IMR-90 (cell line): ENCODE measurements at regions of chr9 and their contacts with region 1.

Region 1: GRCh38 chr9:34899535-34900158 is 58.4 kb upstream of the PHF24 start:
- DNase-seq: peak; percentile 71
- ATAC-seq: peak; percentile 100
- H3K4me3 ChIP-seq: no peak overlapping the region
- H3K27ac ChIP-seq: no peak overlapping the region
- H3K4me1 ChIP-seq: no peaks in the 10 kb centered on the region
- H3K27me3 ChIP-seq: peaks cover 25% of the 10 kb centered on the region
- CTCF ChIP-seq: peak; percentile 94
- POLR2A ChIP-seq: no peak
- RAD21 ChIP-seq: peak; percentile 97

Region 2: GRCh38 chr9:34222451-34222850 is 677.2 kb before region 1 on chr9:
- CTCF ChIA-PET with region 1: no interaction called
- POLR2A ChIA-PET with region 1: no interaction called
- dilution Hi-C with region 1: no loop called
- in situ Hi-C with region 1: no loop called
- intact Hi-C with region 1: no loop called
- DNase-seq: peak; percentile 27
- ATAC-seq: peak; percentile 61
- H3K4me3 ChIP-seq: no peak overlapping the region
- H3K27ac ChIP-seq: no peak overlapping the region
- H3K4me1 ChIP-seq: peaks cover 6% of the 10 kb centered on the region
- H3K27me3 ChIP-seq: no peaks in the 10 kb centered on the region
- CTCF ChIP-seq: no peak
- POLR2A ChIP-seq: no peak
- RAD21 ChIP-seq: no peak

Region 3: GRCh38 chr9:34954225-34954624 is 54.6 kb after region 1 on chr9:
- CTCF ChIA-PET with region 1: interaction called, 3 read pairs
- POLR2A ChIA-PET with region 1: no interaction called
- dilution Hi-C with region 1: no loop called
- in situ Hi-C with region 1: no loop called
- intact Hi-C with region 1: loop called (anchors 2 kb)
- DNase-seq: no peak
- ATAC-seq: no peak
- H3K4me3 ChIP-seq: no peak overlapping the region
- H3K27ac ChIP-seq: no peak overlapping the region
- H3K4me1 ChIP-seq: no peaks in the 10 kb centered on the region
- H3K27me3 ChIP-seq: peaks cover 34% of the 10 kb centered on the region
- CTCF ChIP-seq: no peak
- POLR2A ChIP-seq: no peak
- RAD21 ChIP-seq: no peak

Region 4: DNA sequence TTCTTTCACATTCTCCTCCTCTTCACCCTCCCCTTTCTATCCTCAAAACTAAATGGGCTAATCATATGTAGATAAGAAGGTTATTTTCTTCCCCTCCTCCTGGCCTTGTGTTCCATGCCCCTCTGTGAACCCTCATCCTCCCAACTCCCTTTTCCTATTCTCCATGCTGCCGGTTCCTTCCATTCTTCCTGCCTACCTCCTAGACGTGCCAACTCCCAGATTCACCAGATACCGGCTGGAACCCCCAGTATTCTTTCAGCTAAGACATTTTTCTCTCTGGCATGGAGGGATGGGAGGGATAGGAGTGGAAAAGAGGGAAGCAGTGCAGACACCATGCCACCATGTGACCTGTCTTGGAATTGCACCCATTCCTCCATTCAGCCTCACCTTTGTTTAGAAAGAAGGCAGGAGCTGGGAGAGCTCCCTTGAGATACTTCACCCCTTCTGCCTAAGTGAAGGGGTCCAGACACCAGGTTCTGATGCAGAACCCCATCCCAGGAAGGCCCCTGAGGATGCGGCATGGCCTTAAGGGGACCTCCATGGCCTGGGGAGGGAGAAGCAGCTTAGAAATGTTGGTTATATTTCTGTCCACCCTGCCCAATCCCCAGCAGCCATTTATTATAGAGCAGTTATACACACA is 94.7 kb after region 1 on chr9:
- CTCF ChIA-PET with region 1: interaction called, 14 read pairs
- POLR2A ChIA-PET with region 1: no interaction called
- dilution Hi-C with region 1: no loop called
- in situ Hi-C with region 1: no loop called
- intact Hi-C with region 1: loop called (anchors 1 kb)
- DNase-seq: peak; percentile 49
- ATAC-seq: peak; percentile 21
- H3K4me3 ChIP-seq: no peak overlapping the region
- H3K27ac ChIP-seq: peak overlapping the region; percentile 84
- H3K4me1 ChIP-seq: peaks cover 44% of the 10 kb centered on the region
- H3K27me3 ChIP-seq: no peaks in the 10 kb centered on the region
- CTCF ChIP-seq: peak; percentile 67
- POLR2A ChIP-seq: no peak
- RAD21 ChIP-seq: peak; percentile 75

Region 5: GRCh38 chr9:35096035-35096849 is 196.6 kb after region 1 on chr9 and contains the start of gene PIGO:
- CTCF ChIA-PET with region 1: interaction called, 4 read pairs
- POLR2A ChIA-PET with region 1: no interaction called
- dilution Hi-C with region 1: no loop called
- in situ Hi-C with region 1: loop called (anchors 5 kb)
- intact Hi-C with region 1: loop called (anchors 1 kb)
- DNase-seq: peak; percentile 76
- ATAC-seq: peak; percentile 97
- H3K4me3 ChIP-seq: peak within 1 kb of the TSS; percentile 89
- H3K27ac ChIP-seq: peak within 1 kb of the TSS; percentile 87
- H3K4me1 ChIP-seq: no peaks in the 10 kb centered on the region
- H3K27me3 ChIP-seq: no peaks in the 10 kb centered on the region
- CTCF ChIP-seq: peak; percentile 90
- POLR2A ChIP-seq: no peak
- RAD21 ChIP-seq: peak; percentile 72
- total RNA-seq, gene PIGO: 8.1 and 9.3 TPM in 2 replicates

Region 6: DNA sequence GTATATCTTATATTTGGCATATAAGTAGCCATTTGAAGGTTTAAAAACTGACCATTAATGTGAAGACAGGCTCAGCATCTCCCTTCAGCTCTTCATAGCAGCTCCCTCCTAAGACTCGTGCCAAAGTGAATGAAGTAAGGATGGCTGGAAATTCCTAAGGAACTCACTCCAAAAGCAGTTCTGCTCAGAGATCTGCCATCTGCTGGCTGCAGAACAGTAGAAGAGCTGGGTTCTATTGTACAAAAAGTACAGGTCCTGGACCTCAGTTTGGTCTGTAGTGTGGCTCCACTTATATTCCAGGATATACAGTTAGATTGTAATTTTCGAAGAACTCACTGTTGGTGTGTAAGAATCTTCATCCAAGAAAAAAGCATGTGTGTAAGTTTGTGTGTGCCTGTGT is 485.4 kb after region 1 on chr9:
- CTCF ChIA-PET with region 1: no interaction called
- POLR2A ChIA-PET with region 1: no interaction called
- dilution Hi-C with region 1: no loop called
- in situ Hi-C with region 1: no loop called
- intact Hi-C with region 1: no loop called
- DNase-seq: peak; percentile 78
- ATAC-seq: peak; percentile 96
- H3K4me3 ChIP-seq: no peak overlapping the region
- H3K27ac ChIP-seq: no peak overlapping the region
- H3K4me1 ChIP-seq: no peaks in the 10 kb centered on the region
- H3K27me3 ChIP-seq: no peaks in the 10 kb centered on the region
- CTCF ChIP-seq: peak; percentile 61
- POLR2A ChIP-seq: no peak
- RAD21 ChIP-seq: peak; percentile 64

Region 7: DNA sequence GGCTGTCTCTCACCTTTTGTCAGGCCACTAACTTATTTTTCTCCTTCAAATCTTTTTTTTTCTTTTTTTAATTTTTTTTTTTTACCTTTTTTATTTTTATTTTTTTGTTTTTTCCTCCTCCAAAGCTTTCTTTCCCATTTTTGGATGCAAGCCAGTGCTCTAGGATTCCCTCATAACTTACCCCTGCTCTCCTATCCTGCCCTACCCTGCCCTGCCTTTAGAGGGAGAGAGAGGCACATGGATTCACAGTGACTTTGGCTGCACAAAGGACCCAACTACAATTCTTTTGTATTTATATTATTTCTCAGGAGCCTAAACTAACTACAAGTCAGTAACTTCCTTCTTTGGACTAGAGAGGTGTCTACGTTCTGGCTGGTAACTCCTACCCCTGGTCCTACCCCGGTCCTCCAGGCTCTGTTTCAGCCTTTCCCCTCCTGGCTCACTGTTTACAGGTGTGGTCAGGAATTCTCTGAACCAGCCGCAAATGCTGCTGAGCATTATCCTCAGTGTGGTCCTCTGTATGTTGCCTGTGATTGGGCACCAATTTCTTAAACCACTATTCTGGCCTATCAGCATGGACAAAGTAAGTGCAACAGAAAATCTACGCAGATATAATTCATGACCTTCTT is 581.8 kb after region 1 on chr9:
- CTCF ChIA-PET with region 1: no interaction called
- POLR2A ChIA-PET with region 1: no interaction called
- dilution Hi-C with region 1: no loop called
- in situ Hi-C with region 1: loop called (anchors 10 kb)
- intact Hi-C with region 1: loop called (anchors 1 kb)
- DNase-seq: peak; percentile 75
- ATAC-seq: peak; percentile 78
- H3K4me3 ChIP-seq: no peak overlapping the region
- H3K27ac ChIP-seq: no peak overlapping the region
- H3K4me1 ChIP-seq: peaks cover 4% of the 10 kb centered on the region; the same call in 1 of the 2 replicates
- H3K27me3 ChIP-seq: peaks cover 3% of the 10 kb centered on the region; the same call in 1 of the 2 replicates
- CTCF ChIP-seq: peak; percentile 89
- POLR2A ChIP-seq: no peak
- RAD21 ChIP-seq: peak; percentile 89